Heart right ventricle (tissue), 16 donors: ENCODE measurements at regions of chr22 and their contacts with region 1.

Region 1: DNA sequence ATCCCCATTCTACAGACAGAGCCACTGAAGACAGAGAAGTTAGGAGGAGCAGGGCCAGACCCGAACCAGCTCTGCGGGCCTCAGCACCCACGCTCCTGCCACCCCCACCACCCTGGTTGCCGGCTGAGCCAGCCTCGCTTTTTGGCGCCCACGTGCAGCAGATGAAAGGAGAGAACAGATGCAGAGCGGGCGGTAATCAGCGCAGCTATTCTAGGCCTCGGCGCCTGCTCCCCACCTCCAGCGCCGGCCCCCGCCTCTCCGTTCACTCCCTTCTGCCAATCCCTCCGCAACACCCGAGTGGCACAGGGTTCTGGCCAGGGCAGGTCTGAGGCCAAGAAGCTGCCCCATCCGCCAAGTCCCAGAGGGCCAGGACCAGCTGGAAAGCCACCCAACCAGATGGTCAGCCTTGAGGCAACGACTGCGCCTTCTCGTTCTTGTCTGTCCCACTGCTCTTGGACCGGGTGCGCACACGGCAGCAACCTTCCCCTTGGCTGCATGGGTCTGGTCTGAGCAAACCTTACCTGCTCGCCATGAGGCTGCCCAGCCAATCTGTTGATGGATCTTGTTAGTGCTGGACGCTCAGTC is 16.8 kb downstream of the DNAL4 start:
- DNase-seq: no peak
- ATAC-seq: no peak
- H3K4me3 ChIP-seq: no peak overlapping the region
- H3K27ac ChIP-seq: no peak overlapping the region
- H3K4me1 ChIP-seq: peaks cover 4 to 22% (median 18%) of the 10 kb centered on the region in 9 donors
- H3K27me3 ChIP-seq: no peaks in the 10 kb centered on the region
- CTCF ChIP-seq: no peak

Region 2: GRCh38 chr22:38724926-38725571 is 52.1 kb before region 1 on chr22:
- intact Hi-C with region 1: no loop called
- DNase-seq: no peak
- ATAC-seq: peak in 1 of 8 donors; percentile 8
- H3K4me3 ChIP-seq: no peak overlapping the region
- H3K27ac ChIP-seq: no peak overlapping the region
- H3K4me1 ChIP-seq: peaks cover 0 to 11% (median 0%) of the 10 kb centered on the region in 9 donors
- H3K27me3 ChIP-seq: no peaks in the 10 kb centered on the region
- CTCF ChIP-seq: peak in 8 of 9 donors; percentile 6 to 51 (median 40)

Region 3: GRCh38 chr22:38740754-38741153 is 36.4 kb before region 1 on chr22:
- intact Hi-C with region 1: no loop called
- DNase-seq: no peak
- ATAC-seq: no peak
- H3K4me3 ChIP-seq: no peak overlapping the region
- H3K27ac ChIP-seq: no peak overlapping the region
- H3K4me1 ChIP-seq: peaks cover 0 to 29% (median 0%) of the 10 kb centered on the region in 9 donors
- H3K27me3 ChIP-seq: no peaks in the 10 kb centered on the region
- CTCF ChIP-seq: no peak

Region 4: DNA sequence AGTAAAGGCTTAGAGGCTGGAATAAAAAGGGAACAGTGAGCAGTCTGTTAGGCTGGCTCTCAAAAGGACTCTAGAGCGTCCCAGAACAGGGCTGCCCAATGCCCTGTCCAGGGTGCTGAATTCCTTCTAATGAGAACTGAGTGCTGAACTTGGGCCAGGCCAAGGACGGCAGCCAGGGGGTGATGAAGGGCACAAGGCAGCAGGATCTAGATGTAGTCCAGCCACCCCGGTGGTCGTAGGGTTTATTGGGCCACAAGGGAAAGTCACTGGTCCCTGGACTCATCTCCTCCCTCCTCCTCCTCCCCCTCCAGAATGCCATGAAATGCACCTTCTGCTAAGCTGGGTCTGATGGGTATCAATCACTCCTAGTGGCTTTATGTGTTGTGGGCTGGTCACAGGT is 47.4 kb after region 1 on chr22:
- intact Hi-C with region 1: loop called in 1 of 10 experiments (anchors 10 kb)
- DNase-seq: peak; percentile 49 to 72
- ATAC-seq: peak; percentile 68 to 89 (median 82)
- H3K4me3 ChIP-seq: no peak overlapping the region
- H3K27ac ChIP-seq: no peak overlapping the region
- H3K4me1 ChIP-seq: peaks cover 0 to 3% (median 0%) of the 10 kb centered on the region in 9 donors
- H3K27me3 ChIP-seq: no peaks in the 10 kb centered on the region
- CTCF ChIP-seq: peak in 7 of 9 donors; percentile 33 to 58 (median 49)

Region 5: GRCh38 chr22:39123751-39124601 is 346.8 kb after region 1 on chr22:
- intact Hi-C with region 1: loop called in 2 of 10 experiments (anchors 10 kb)
- DNase-seq: no peak
- ATAC-seq: peak in 3 of 8 donors; percentile 23 to 35 (median 32)
- H3K4me3 ChIP-seq: no peak overlapping the region
- H3K27ac ChIP-seq: no peak overlapping the region
- H3K4me1 ChIP-seq: peaks cover 0 to 2% (median 0%) of the 10 kb centered on the region in 9 donors
- H3K27me3 ChIP-seq: no peaks in the 10 kb centered on the region
- CTCF ChIP-seq: no peak

Region 6: GRCh38 chr22:39135090-39135896 is 358.1 kb after region 1 on chr22:
- intact Hi-C with region 1: loop called in 1 of 10 experiments (anchors 10 kb)
- DNase-seq: peak; percentile 47 to 56
- ATAC-seq: peak; percentile 30 to 83 (median 64)
- H3K4me3 ChIP-seq: no peak overlapping the region
- H3K27ac ChIP-seq: no peak overlapping the region
- H3K4me1 ChIP-seq: peaks cover 4 to 33% (median 19%) of the 10 kb centered on the region in 9 donors
- H3K27me3 ChIP-seq: no peaks in the 10 kb centered on the region
- CTCF ChIP-seq: peak; percentile 19 to 63 (median 52)